Dorsolateral prefrontal cortex (tissue), 120 donors: ENCODE measurements at regions of chrX and their contacts with region 1.

Region 1: GRCh38 chrX:68822641-68823410 is 6.0 kb upstream of the EFNB1 start:
- DNase-seq: no peak
- H3K4me3 ChIP-seq: no peak overlapping the region
- H3K27ac ChIP-seq: no peak overlapping the region
- H3K27me3 ChIP-seq: peaks cover 0 to 79% (median 35%) of the 10 kb centered on the region in 45 donors
- CTCF ChIP-seq: peak in 52 of 56 donors; percentile 18 to 71 (median 54)

Region 2: DNA sequence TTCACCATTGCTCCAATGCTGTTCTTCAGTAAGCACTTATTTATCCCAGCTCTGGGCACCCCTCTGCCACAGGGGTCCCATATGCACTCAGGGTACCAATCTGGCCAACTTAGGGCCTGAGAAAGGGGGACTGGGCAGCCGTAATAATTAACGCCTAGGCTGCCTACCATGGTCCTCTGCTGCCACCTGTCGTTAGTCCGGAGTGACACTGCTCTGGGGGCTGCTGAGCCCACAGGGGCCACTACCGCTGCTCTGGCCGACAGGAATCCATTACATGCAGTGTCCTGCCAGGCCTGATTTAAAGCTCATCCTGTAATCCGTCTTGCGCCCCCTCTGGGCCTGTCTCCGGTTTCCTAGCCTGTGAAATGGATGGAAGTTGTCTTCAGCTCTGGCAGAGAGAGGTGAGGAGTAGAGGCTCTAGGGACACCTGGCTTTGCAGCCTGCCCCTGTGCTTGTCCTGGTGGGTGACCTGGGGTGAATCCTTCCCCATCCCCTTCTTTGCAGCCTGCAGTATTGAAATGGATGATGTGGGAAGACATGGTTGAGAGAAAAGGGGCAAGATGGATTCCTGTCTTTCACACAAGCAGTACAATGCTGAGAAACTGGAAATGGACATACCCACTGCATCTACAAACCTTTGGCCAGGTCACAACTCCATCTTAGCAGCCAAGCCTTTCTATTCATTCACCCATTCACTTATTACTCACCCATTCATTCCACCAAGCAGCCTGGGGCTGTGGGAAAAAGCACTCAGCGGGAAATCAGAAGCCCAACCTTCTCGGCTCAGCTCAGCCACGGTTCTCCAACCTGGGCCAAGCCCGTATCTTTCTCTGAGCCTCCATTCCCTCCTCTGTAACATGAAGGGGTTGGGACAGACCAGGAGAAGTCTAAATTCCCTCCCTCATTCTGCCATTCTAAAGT is 565.0 kb after region 1 on chrX:
- intact Hi-C with region 1: loop called (anchors 2 to 5 kb)
- DNase-seq: peak in 8 of 10 donors; percentile 18 to 56 (median 28)
- H3K4me3 ChIP-seq: no peak overlapping the region
- H3K27ac ChIP-seq: no peak overlapping the region
- H3K27me3 ChIP-seq: peaks cover 0 to 100% (median 55%) of the 10 kb centered on the region in 45 donors
- CTCF ChIP-seq: peak in 55 of 56 donors; percentile 16 to 77 (median 64)